SK-N-SH (cell line): ENCODE measurements at regions of chr2 and their contacts with region 1.

Region 1: GRCh38 chr2:224284134-224284946 is 117.6 kb downstream of the FAM124B start:
- DNase-seq: peak; percentile 12
- H3K4me3 ChIP-seq: no peak overlapping the region; a peak in 1 of 4 replicates
- H3K27ac ChIP-seq: no peak overlapping the region
- H3K4me1 ChIP-seq: peaks cover 0 to 2% of the 10 kb centered on the region in 2 experiments; a peak in 1 of 4 replicates
- H3K27me3 ChIP-seq: no peaks in the 10 kb centered on the region
- CTCF ChIP-seq: peak; percentile 93
- EP300 ChIP-seq: no peak
- RAD21 ChIP-seq: peak; percentile 79

Region 2: GRCh38 chr2:223976635-223977226 is 307.6 kb before region 1 on chr2:
- CTCF ChIA-PET with region 1: interaction called, 288 read pairs
- POLR2A ChIA-PET with region 1: no interaction called
- DNase-seq: no peak
- H3K4me3 ChIP-seq: no peak overlapping the region
- H3K27ac ChIP-seq: peak overlapping the region in 1 of 2 experiments; percentile 52; a peak in 2 of 4 replicates
- H3K4me1 ChIP-seq: no peaks in the 10 kb centered on the region; a peak in 1 of 4 replicates
- H3K27me3 ChIP-seq: no peaks in the 10 kb centered on the region
- CTCF ChIP-seq: no peak
- EP300 ChIP-seq: no peak
- RAD21 ChIP-seq: no peak

Region 3: DNA sequence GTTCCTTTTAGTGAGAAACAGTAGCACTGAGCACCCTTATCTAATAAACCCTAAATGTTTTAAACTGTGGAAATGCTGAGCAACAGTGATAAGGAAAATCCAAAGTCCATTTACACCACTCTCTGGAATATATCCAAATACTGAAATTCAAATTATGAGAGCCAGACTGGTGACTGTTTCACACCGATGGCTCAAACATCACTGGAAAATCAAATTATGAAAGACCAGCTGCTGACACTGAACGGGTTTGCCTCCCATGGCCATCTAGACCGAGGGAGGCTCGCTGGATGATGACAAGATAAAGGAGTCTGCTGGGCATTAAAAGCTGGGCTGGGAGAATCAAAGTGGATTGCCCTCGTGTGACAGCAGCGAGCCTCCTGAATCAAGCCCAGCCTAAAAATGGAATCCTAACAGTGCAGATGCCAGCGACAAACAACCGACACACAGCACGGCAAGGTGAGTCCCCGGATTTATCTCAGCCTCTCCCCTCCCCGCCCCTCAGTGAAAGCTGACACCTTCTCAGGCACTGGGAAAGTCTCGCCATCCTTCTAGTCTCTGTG is 275.6 kb before region 1 on chr2:
- CTCF ChIA-PET with region 1: interaction called, 20 read pairs
- POLR2A ChIA-PET with region 1: no interaction called
- DNase-seq: peak; percentile 85
- H3K4me3 ChIP-seq: no peak overlapping the region; a peak in 1 of 4 replicates
- H3K27ac ChIP-seq: peak overlapping the region in 1 of 2 experiments; percentile 95; a peak in 2 of 4 replicates
- H3K4me1 ChIP-seq: peaks cover 26 to 28% of the 10 kb centered on the region in 2 experiments; a peak in 3 of 4 replicates
- H3K27me3 ChIP-seq: no peaks in the 10 kb centered on the region
- CTCF ChIP-seq: no peak
- EP300 ChIP-seq: peak in 1 of 2 experiments; percentile 92; a peak in 2 of 4 replicates
- RAD21 ChIP-seq: peak; percentile 5; the same call in 1 of the 2 replicates

Region 4: GRCh38 chr2:224260372-224261020 is 23.8 kb before region 1 on chr2:
- CTCF ChIA-PET with region 1: interaction called, 18 read pairs
- POLR2A ChIA-PET with region 1: no interaction called
- DNase-seq: no peak
- H3K4me3 ChIP-seq: no peak overlapping the region
- H3K27ac ChIP-seq: peak overlapping the region in 1 of 2 experiments; percentile 39; a peak in 1 of 4 replicates
- H3K4me1 ChIP-seq: peaks cover 0 to 14% of the 10 kb centered on the region in 2 experiments; a peak in 3 of 4 replicates
- H3K27me3 ChIP-seq: no peaks in the 10 kb centered on the region
- CTCF ChIP-seq: no peak
- EP300 ChIP-seq: no peak
- RAD21 ChIP-seq: no peak

Region 5: DNA sequence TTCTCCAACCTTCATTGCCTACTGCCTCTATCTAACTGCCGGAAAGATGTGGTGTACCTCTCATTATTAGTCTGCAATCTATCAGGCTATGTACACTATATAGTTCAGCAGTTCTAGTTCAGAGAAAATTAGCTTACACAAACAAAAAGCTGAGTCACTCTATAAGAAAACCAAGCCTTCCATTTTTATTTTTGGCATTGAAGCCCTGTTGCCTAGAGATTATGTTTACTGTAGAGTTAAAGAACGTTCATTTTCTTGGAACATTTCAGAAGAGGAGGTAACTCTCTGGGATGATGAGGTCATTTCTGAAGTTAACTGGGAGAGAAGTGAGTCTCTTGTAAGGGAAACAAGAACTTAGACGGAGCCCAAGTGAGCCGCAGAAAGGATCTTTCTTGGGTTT is 15.9 kb before region 1 on chr2:
- CTCF ChIA-PET with region 1: interaction called, 24 read pairs
- POLR2A ChIA-PET with region 1: no interaction called
- DNase-seq: no peak
- H3K4me3 ChIP-seq: no peak overlapping the region
- H3K27ac ChIP-seq: peak overlapping the region in 1 of 2 experiments; percentile 79; a peak in 2 of 4 replicates
- H3K4me1 ChIP-seq: peaks cover 0 to 13% of the 10 kb centered on the region in 2 experiments; a peak in 3 of 4 replicates
- H3K27me3 ChIP-seq: no peaks in the 10 kb centered on the region
- CTCF ChIP-seq: no peak
- EP300 ChIP-seq: no peak
- RAD21 ChIP-seq: no peak